ENCODE measurements at regions of chr3 and their contacts with region 1.

Region 1: GRCh38 chr3:12830785-12831156 is 10.6 kb downstream of the RPL32 start:
- DNase-seq: no peak
- ATAC-seq: peak; percentile 23 to 39; a peak in 5 of 6 replicates
- H3K4me3 ChIP-seq: no peak overlapping the region
- H3K27ac ChIP-seq: no peak overlapping the region; a peak in 1 of 6 replicates
- H3K4me1 ChIP-seq: peaks cover 24% of the 10 kb centered on the region
- CTCF ChIP-seq: no peak
- EP300 ChIP-seq: no peak
- POLR2A ChIP-seq: no peak
- RAD21 ChIP-seq: no peak

Region 2: GRCh38 chr3:12706504-12707253 is 124.1 kb before region 1 on chr3:
- CTCF ChIA-PET with region 1: interaction called, 10 read pairs
- POLR2A ChIA-PET with region 1: no interaction called
- DNase-seq: peak; percentile 59 to 83
- ATAC-seq: peak; percentile 89 to 96
- H3K4me3 ChIP-seq: no peak overlapping the region
- H3K27ac ChIP-seq: no peak overlapping the region
- H3K4me1 ChIP-seq: peaks cover 9% of the 10 kb centered on the region
- CTCF ChIP-seq: peak; percentile 57
- EP300 ChIP-seq: no peak
- POLR2A ChIP-seq: no peak
- RAD21 ChIP-seq: peak; percentile 38 to 69; a peak in 4 of 5 replicates

Region 3: DNA sequence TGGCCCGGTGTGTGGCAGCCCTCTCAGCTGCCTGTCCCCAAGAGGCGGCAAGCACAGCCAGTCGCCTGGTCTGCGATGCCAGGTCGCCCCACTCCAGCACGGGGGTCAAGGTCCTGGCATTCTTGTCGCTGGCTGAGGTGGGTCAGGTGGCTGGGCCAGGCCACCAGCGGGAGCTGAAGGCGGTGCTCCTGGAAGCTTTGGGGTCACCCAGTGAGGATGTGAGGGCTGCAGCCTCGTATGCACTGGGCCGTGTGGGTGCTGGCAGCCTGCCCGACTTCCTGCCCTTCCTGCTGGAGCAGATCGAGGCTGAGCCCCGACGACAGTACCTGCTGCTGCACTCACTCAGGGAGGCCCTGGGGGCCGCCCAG is 13.4 kb before region 1 on chr3:
- CTCF ChIA-PET with region 1: interaction called, 113 read pairs
- POLR2A ChIA-PET with region 1: interaction called, 4 read pairs
- DNase-seq: no peak
- ATAC-seq: no peak
- H3K4me3 ChIP-seq: no peak overlapping the region
- H3K27ac ChIP-seq: no peak overlapping the region
- H3K4me1 ChIP-seq: no peaks in the 10 kb centered on the region
- CTCF ChIP-seq: no peak
- EP300 ChIP-seq: no peak
- POLR2A ChIP-seq: no peak
- RAD21 ChIP-seq: no peak

Region 4: GRCh38 chr3:12853191-12853741 is 22.5 kb after region 1 on chr3:
- CTCF ChIA-PET with region 1: no interaction called
- POLR2A ChIA-PET with region 1: no interaction called
- DNase-seq: no peak
- ATAC-seq: no peak
- H3K4me3 ChIP-seq: no peak overlapping the region
- H3K27ac ChIP-seq: no peak overlapping the region
- H3K4me1 ChIP-seq: no peaks in the 10 kb centered on the region
- CTCF ChIP-seq: no peak
- EP300 ChIP-seq: no peak
- POLR2A ChIP-seq: no peak
- RAD21 ChIP-seq: no peak

Region 5: DNA sequence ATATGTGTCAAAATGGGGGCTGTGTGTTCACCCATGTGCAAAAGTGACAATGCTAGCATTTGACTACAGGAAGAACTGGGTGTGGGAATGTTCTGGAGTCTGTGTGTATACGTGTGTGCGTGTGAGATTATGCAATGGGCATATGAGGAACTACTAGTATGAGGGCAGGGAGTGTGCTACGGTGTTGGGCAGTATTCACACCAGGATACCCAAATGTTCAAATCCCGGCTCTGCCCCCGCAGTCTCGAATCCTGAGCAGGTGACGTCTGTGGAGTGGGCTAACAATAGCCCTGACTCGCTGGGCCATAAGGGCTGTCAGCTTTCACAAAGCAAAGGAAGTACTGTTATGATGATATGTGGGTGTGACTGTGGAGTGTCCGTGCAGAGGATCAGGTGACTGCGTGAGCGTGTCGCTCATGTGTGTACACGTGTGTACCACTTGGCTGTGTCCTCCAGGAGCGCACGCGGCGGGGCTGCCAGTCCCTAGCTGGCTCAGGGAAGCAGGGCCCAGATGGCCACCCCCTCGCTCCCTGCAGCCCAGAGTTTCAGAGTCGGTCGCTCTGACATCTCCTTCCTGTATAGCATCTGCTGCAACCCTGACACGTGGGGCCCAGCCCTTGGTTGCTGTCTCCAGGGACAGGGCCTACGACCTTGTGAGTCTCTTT is 215.3 kb after region 1 on chr3:
- CTCF ChIA-PET with region 1: no interaction called
- POLR2A ChIA-PET with region 1: no interaction called
- DNase-seq: no peak
- ATAC-seq: no peak; a peak in 1 of 6 replicates
- H3K4me3 ChIP-seq: no peak overlapping the region
- H3K27ac ChIP-seq: no peak overlapping the region
- H3K4me1 ChIP-seq: no peaks in the 10 kb centered on the region
- CTCF ChIP-seq: no peak
- EP300 ChIP-seq: no peak
- POLR2A ChIP-seq: no peak
- RAD21 ChIP-seq: no peak

Measured in A549 (cell line).